HepG2 (cell line): ENCODE measurements at regions of chr16 and their contacts with region 1.

Region 1: GRCh38 chr16:55465077-55465896 is 13.7 kb upstream of the MMP2 start:
- DNase-seq: peak; percentile 81
- ATAC-seq: peak; percentile 94
- H3K4me3 ChIP-seq: no peak overlapping the region
- H3K27ac ChIP-seq: no peak overlapping the region
- H3K4me1 ChIP-seq: no peaks in the 10 kb centered on the region
- H3K27me3 ChIP-seq: peaks cover 0 to 10% of the 10 kb centered on the region in 2 experiments; a peak in 2 of 5 replicates
- CTCF ChIP-seq: peak; percentile 100
- EP300 ChIP-seq: no peak
- POLR2A ChIP-seq: no peak
- RAD21 ChIP-seq: peak; percentile 100

Region 2: GRCh38 chr16:55257966-55258613 is 207.2 kb before region 1 on chr16:
- CTCF ChIA-PET with region 1: no interaction called
- POLR2A ChIA-PET with region 1: no interaction called
- in situ Hi-C with region 1: no loop called
- intact Hi-C with region 1: no loop called
- DNase-seq: peak; percentile 41
- ATAC-seq: peak; percentile 97
- H3K4me3 ChIP-seq: no peak overlapping the region
- H3K27ac ChIP-seq: no peak overlapping the region
- H3K4me1 ChIP-seq: no peaks in the 10 kb centered on the region
- H3K27me3 ChIP-seq: no peaks in the 10 kb centered on the region; a peak in 2 of 5 replicates
- CTCF ChIP-seq: peak; percentile 78
- EP300 ChIP-seq: no peak
- POLR2A ChIP-seq: no peak
- RAD21 ChIP-seq: peak; percentile 84

Region 3: GRCh38 chr16:55437625-55438024 is 27.7 kb before region 1 on chr16:
- CTCF ChIA-PET with region 1: no interaction called
- POLR2A ChIA-PET with region 1: no interaction called
- in situ Hi-C with region 1: no loop called
- intact Hi-C with region 1: no loop called
- DNase-seq: no peak
- ATAC-seq: no peak
- H3K4me3 ChIP-seq: no peak overlapping the region
- H3K27ac ChIP-seq: no peak overlapping the region
- H3K4me1 ChIP-seq: peaks cover 8% of the 10 kb centered on the region; the same call in 1 of the 2 replicates
- H3K27me3 ChIP-seq: peaks cover 0 to 13% of the 10 kb centered on the region in 2 experiments; a peak in 2 of 5 replicates
- CTCF ChIP-seq: no peak
- EP300 ChIP-seq: no peak
- POLR2A ChIP-seq: no peak
- RAD21 ChIP-seq: no peak

Region 4: DNA sequence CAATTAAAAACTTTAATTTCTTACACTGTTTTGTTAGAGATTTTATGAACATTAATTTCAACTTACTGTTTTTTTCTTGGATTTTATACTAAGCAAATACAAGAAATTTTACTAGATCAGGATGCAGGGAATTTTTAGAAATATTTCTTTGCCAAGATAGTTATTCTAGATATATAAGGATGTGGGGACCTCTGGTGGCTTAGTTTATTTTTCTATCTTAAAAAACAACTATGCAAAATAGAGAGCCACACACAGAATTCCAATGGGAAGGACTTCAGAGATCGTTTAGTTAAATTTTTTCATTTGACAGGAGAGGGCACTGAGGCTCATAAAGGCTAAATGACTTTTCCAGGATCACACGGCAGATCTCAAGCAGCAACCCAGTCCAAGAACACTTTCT is 78.2 kb after region 1 on chr16:
- CTCF ChIA-PET with region 1: interaction called, 130 read pairs
- POLR2A ChIA-PET with region 1: no interaction called
- in situ Hi-C with region 1: loop called (anchors 5 kb)
- intact Hi-C with region 1: loop called (anchors 1 kb)
- DNase-seq: peak; percentile 35
- ATAC-seq: no peak
- H3K4me3 ChIP-seq: no peak overlapping the region
- H3K27ac ChIP-seq: no peak overlapping the region
- H3K4me1 ChIP-seq: no peaks in the 10 kb centered on the region
- H3K27me3 ChIP-seq: no peaks in the 10 kb centered on the region
- CTCF ChIP-seq: 0 out of 2 replicates have a peak, but pooled peaks have one; percentile 16
- EP300 ChIP-seq: no peak
- POLR2A ChIP-seq: no peak
- RAD21 ChIP-seq: 0 out of 2 replicates have a peak, but pooled peaks have one; percentile 33

Region 5: DNA sequence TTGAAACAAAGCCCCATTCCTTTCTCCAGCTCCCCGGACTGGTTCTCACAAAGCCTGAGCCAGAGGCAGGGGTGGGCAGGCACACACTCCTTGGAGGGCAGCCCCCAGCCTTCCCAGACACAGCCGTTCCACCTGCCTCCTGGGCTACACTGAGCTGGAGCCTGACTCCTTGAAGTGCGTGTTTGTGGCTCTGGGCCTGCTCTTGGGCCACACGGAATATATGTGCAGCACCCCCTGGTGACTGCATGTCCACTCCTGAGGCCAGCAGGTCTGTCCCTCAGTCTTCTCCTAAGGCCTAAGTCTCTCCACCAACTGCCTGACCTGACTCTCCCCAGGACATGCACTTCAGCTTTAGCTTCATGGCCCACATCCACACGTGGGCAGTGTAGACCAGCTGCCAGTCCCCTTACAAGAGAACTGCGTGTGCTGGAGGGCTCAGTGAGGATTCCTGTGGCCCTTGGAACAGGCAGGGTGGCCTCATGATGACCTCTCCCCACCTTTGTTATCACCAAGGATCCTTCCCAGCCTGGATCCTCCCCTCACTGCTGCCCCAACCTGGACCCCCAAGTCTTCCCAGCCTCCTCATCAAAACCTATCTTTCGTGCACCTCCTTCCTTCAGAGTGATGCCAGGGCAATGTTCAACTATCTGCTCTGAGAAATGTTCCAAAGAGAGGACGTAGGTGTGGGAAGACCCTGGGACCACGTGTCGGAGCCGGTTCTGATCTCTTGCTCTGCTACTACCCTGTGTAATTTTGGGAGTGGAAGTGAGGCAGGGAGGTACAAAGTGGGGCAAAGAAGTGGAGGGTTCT is 178.1 kb after region 1 on chr16:
- CTCF ChIA-PET with region 1: interaction called, 27 read pairs
- POLR2A ChIA-PET with region 1: no interaction called
- in situ Hi-C with region 1: loop called (anchors 10 kb)
- intact Hi-C with region 1: loop called (anchors 1 kb)
- DNase-seq: peak; percentile 59
- ATAC-seq: peak; percentile 98
- H3K4me3 ChIP-seq: no peak overlapping the region
- H3K27ac ChIP-seq: no peak overlapping the region
- H3K4me1 ChIP-seq: peaks cover 39% of the 10 kb centered on the region
- H3K27me3 ChIP-seq: no peaks in the 10 kb centered on the region
- CTCF ChIP-seq: peak; percentile 82
- EP300 ChIP-seq: no peak
- POLR2A ChIP-seq: no peak
- RAD21 ChIP-seq: peak; percentile 79

Region 6: DNA sequence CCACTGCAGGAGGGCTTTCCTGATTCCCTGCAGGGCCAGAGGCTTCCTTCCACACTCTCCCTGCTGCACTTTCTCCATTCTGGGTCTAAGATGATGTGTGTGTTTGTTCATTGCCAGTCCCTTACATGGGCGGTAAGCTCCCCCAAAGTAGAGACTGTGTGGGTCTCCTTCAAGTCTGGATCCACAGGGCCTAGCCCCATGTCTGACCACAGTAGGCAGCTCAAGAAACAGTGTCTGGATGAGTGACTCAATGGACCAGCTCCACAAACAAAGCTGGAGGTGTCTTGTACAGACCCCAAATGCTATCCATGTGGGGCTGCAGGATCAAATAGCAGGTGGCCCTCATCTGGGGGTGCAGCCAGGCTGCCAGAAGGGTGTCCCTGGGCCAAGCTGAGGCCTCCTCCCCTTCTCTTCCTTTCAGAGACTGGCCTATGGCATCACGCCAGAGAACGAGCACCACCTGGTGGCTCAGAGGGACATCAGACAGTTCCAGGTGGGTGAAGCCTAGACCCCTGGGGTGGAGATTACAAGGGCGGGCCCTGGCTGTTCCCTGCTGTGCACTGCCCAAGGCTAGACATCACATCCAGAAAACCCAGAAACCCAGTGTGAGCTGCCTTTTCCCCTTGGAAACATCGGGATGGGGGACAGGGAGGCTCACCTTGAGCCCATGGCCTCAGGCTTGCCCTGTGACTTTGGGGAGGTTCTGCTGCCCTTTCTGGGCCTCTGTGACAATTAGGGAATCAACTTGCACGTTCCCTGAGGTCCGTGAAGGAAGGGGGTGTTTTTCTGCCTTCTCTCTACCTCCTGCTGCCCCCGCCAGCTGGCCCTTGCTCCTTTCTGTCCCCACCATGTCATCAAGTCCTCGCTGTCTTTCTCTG is 236.4 kb after region 1 on chr16:
- CTCF ChIA-PET with region 1: interaction called, 423 read pairs
- POLR2A ChIA-PET with region 1: no interaction called
- in situ Hi-C with region 1: loop called (anchors 5 kb)
- intact Hi-C with region 1: loop called (anchors 1 kb)
- DNase-seq: peak; percentile 73
- ATAC-seq: peak; percentile 97
- H3K4me3 ChIP-seq: no peak overlapping the region
- H3K27ac ChIP-seq: no peak overlapping the region
- H3K4me1 ChIP-seq: 0 out of 2 replicates have a peak, but pooled peaks cover 6% of the 10 kb centered on the region
- H3K27me3 ChIP-seq: peaks cover 0 to 2% of the 10 kb centered on the region in 2 experiments; a peak in 1 of 5 replicates
- CTCF ChIP-seq: peak; percentile 98
- EP300 ChIP-seq: no peak
- POLR2A ChIP-seq: no peak
- RAD21 ChIP-seq: peak; percentile 90

Region 7: GRCh38 chr16:55711959-55712876 is 246.9 kb after region 1 on chr16:
- CTCF ChIA-PET with region 1: interaction called, 14 read pairs
- POLR2A ChIA-PET with region 1: no interaction called
- in situ Hi-C with region 1: no loop called
- intact Hi-C with region 1: no loop called
- DNase-seq: peak; percentile 61
- ATAC-seq: peak; percentile 94
- H3K4me3 ChIP-seq: no peak overlapping the region
- H3K27ac ChIP-seq: no peak overlapping the region
- H3K4me1 ChIP-seq: peaks cover 8% of the 10 kb centered on the region; the same call in 1 of the 2 replicates
- H3K27me3 ChIP-seq: peaks cover 0 to 2% of the 10 kb centered on the region in 2 experiments; a peak in 2 of 5 replicates
- CTCF ChIP-seq: peak; percentile 90
- EP300 ChIP-seq: no peak
- POLR2A ChIP-seq: no peak
- RAD21 ChIP-seq: peak; percentile 84

Region 8: DNA sequence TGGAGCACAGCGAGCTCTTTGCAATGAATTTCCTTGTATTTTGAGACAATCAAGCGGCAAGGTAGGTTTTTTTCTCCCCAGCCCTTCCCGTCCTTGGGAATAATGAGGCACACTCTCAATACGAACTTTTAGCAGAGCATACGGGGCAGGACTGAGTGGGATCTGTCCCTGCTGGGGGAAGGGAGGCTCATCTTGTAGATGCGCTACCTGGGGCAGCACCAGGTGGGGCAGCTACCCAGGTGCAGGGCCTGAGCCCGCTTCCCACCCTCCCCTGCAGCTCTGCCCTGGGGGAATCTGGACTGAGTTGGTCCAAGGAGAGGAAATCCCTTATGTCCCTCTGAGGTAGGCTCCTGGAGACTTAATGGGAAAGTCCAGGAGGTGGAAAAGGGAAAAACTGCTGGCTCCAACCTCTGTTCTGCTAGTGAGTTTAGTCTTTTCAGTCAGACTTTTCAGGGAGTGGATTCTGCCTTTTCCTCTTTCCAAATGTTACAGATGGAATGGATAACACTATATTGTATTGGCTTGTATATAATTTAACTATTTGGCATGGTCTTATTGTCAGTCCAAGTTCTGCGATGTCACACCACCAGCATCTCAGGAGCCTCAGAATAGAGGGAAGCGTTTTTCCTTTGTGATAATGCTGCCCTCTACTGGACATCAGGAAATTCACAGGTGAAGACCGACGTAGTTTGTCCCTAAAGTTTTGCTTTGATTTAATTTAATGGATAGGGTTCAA is 377.2 kb after region 1 on chr16:
- CTCF ChIA-PET with region 1: interaction called, 35 read pairs
- POLR2A ChIA-PET with region 1: no interaction called
- in situ Hi-C with region 1: loop called (anchors 5 kb)
- intact Hi-C with region 1: loop called (anchors 1 kb)
- DNase-seq: peak; percentile 56
- ATAC-seq: peak; percentile 86
- H3K4me3 ChIP-seq: no peak overlapping the region
- H3K27ac ChIP-seq: no peak overlapping the region
- H3K4me1 ChIP-seq: peaks cover 6% of the 10 kb centered on the region; the same call in 1 of the 2 replicates
- H3K27me3 ChIP-seq: peaks cover 2 to 12% of the 10 kb centered on the region in 2 experiments; a peak in 4 of 5 replicates
- CTCF ChIP-seq: peak; percentile 85
- EP300 ChIP-seq: no peak
- POLR2A ChIP-seq: no peak
- RAD21 ChIP-seq: peak; percentile 76

Region 9: DNA sequence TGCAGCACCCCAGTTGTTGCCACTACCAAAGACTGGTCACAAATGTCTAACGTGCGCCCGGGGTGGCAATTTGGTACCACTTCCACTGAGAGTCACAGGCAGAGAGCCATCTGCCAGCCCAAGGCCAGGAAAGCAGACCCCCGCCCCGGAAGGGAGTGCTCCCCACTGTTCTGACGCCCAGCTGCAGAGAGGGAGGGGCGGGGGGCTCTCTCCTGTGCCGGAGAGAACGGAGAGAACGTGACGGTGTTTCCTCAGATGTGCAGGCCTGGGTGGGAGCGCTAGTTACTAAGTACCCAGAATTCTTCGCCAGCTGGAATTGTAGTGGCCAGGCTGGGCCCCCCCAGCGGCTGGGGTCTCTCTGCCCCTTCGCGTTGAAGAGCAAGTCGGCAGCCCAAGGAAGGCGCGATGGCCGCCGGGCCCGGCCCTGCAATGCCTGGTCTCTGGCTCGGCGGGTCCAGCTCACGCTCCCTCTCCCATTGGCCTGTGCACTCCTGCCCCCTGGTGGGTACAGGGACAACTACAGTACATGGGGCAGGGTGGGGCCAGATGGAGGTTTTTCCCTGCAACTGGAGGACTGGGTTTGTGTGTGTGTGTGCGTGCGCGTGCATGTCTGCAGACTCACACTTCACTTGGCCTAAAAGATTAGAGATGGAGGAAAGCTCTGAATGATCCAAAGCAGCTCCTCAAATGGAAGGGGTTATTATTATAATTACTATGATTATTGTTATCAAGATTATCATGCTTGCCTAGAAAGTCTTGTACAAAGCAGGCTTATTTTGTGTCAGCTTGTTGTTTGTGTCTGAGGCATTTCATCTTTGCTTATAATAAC is 852.9 kb after region 1 on chr16:
- CTCF ChIA-PET with region 1: interaction called, 9 read pairs
- POLR2A ChIA-PET with region 1: no interaction called
- in situ Hi-C with region 1: loop called (anchors 25 kb)
- intact Hi-C with region 1: no loop called
- DNase-seq: peak; percentile 62
- ATAC-seq: peak; percentile 95
- H3K4me3 ChIP-seq: peak overlapping the region in 1 of 3 experiments; percentile 11; a peak in 1 of 6 replicates
- H3K27ac ChIP-seq: no peak overlapping the region
- H3K4me1 ChIP-seq: no peaks in the 10 kb centered on the region
- H3K27me3 ChIP-seq: peaks cover 3 to 65% of the 10 kb centered on the region in 2 experiments
- CTCF ChIP-seq: peak; percentile 98
- EP300 ChIP-seq: no peak
- POLR2A ChIP-seq: no peak
- RAD21 ChIP-seq: peak; percentile 96